ENCODE measurements at regions of chr5 and their contacts with region 1.

Region 1: DNA sequence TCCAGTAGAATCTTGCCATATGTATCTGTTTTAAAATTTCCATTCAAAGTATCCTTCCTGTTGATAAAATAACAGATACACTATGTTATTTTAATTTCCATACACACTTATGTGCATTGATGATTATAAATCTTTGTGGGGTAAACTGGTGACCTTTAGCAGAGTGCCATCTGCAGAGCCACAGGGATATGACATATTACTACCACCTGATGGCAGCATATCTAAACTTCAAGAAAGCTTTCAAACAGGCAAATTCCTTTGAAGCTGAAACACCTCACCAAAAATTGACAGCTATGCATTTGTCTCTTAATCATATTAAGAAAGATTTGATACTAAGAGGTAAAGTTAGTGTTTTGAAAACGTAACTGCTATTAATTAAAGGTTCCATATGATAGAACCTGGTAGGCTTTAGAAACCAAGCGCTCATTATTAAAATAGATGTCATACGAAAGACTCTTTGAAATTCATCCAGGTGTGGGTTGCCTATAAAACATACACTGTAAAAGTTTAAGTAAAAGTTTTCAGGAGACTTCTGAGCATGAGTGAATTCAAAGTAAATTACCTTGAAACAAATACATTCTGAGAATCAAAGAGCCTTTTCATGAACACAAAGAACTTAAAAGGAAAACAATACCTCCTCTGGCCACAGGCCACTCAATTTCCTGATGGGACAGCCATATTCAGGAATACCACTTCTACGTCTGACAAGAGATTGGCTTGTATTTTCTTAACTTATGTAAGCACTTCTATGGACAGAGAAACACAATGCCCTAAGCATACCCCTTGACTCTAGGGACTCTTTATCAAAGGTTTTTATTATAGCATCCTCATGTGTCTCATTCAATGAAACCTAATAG is 93.3 kb downstream of the KIAA0825 start:
- DNase-seq: peak; percentile 9
- ATAC-seq: peak; percentile 94
- H3K4me3 ChIP-seq: no peak overlapping the region
- H3K27ac ChIP-seq: no peak overlapping the region
- H3K4me1 ChIP-seq: no peaks in the 10 kb centered on the region
- H3K27me3 ChIP-seq: no peaks in the 10 kb centered on the region
- CTCF ChIP-seq: peak; percentile 51 to 76 (median 61); a peak in 5 of 6 replicates
- EP300 ChIP-seq: no peak
- POLR2A ChIP-seq: no peak
- RAD21 ChIP-seq: peak; percentile 90

Region 2: DNA sequence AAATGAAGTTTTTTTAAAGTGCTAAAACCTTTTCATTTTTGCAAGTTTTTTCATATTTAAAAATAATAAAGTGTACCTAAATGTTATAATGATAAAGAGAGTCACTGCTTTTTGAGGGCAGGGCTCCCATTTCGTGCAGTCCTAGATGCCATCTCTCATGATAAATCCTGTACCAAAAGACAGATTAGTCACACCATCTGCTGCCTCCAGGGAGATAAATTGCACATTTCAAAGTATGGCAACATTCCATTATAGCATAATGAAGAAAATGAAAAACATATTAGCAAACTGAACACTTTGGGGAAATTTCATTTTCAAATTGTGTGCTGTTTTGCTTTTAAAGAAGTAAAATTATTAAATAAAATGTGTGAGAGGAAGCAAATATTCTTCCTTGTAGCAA is 163.9 kb before region 1 on chr5:
- CTCF ChIA-PET with region 1: no interaction called
- POLR2A ChIA-PET with region 1: no interaction called
- RAD21 ChIA-PET with region 1: no interaction called
- SMC1A ChIA-PET with region 1: no interaction called
- in situ Hi-C with region 1: no loop called
- intact Hi-C with region 1: no loop called
- DNase-seq: no peak
- ATAC-seq: no peak
- H3K4me3 ChIP-seq: no peak overlapping the region
- H3K27ac ChIP-seq: no peak overlapping the region
- H3K4me1 ChIP-seq: no peaks in the 10 kb centered on the region
- H3K27me3 ChIP-seq: no peaks in the 10 kb centered on the region
- CTCF ChIP-seq: no peak
- EP300 ChIP-seq: no peak
- POLR2A ChIP-seq: no peak
- RAD21 ChIP-seq: no peak

Region 3: DNA sequence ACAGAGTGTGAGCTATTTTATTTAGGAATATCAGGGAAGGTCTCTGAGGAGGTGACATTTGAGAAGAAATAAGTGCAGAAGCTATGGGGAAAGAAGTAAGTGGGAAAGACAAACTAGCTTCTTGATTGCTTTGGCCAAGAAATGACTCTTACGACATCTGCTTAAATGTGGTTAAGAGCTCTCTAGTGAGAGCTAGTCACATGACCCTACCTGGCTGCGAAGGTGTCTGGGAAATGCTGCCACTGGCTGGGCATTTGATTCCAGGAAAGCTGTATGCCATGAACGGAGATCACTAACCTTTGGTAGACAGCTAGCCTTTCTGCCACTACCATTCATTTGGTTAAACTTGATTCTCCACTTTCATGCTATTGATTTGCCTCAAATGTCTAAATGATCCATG is 13.2 kb after region 1 on chr5:
- CTCF ChIA-PET with region 1: interaction called, 10 read pairs
- POLR2A ChIA-PET with region 1: no interaction called
- RAD21 ChIA-PET with region 1: no interaction called
- SMC1A ChIA-PET with region 1: interaction called, 11 read pairs
- in situ Hi-C with region 1: no loop called
- intact Hi-C with region 1: no loop called
- DNase-seq: no peak
- ATAC-seq: no peak
- H3K4me3 ChIP-seq: no peak overlapping the region
- H3K27ac ChIP-seq: no peak overlapping the region
- H3K4me1 ChIP-seq: no peaks in the 10 kb centered on the region
- H3K27me3 ChIP-seq: no peaks in the 10 kb centered on the region
- CTCF ChIP-seq: no peak
- EP300 ChIP-seq: no peak
- POLR2A ChIP-seq: no peak
- RAD21 ChIP-seq: no peak

Region 4: GRCh38 chr5:94613583-94613982 is 88.5 kb after region 1 on chr5:
- CTCF ChIA-PET with region 1: interaction called, 9 read pairs
- POLR2A ChIA-PET with region 1: no interaction called
- RAD21 ChIA-PET with region 1: interaction called, 7 read pairs
- SMC1A ChIA-PET with region 1: interaction called, 16 read pairs
- in situ Hi-C with region 1: no loop called
- intact Hi-C with region 1: loop called (anchors 2 kb)
- DNase-seq: no peak
- ATAC-seq: peak; percentile 32
- H3K4me3 ChIP-seq: no peak overlapping the region
- H3K27ac ChIP-seq: no peak overlapping the region
- H3K4me1 ChIP-seq: peaks cover 3% of the 10 kb centered on the region
- H3K27me3 ChIP-seq: no peaks in the 10 kb centered on the region
- CTCF ChIP-seq: peak; percentile 27 to 32 (median 31); a peak in 4 of 6 replicates
- EP300 ChIP-seq: no peak
- POLR2A ChIP-seq: no peak
- RAD21 ChIP-seq: peak; percentile 44

Region 5: DNA sequence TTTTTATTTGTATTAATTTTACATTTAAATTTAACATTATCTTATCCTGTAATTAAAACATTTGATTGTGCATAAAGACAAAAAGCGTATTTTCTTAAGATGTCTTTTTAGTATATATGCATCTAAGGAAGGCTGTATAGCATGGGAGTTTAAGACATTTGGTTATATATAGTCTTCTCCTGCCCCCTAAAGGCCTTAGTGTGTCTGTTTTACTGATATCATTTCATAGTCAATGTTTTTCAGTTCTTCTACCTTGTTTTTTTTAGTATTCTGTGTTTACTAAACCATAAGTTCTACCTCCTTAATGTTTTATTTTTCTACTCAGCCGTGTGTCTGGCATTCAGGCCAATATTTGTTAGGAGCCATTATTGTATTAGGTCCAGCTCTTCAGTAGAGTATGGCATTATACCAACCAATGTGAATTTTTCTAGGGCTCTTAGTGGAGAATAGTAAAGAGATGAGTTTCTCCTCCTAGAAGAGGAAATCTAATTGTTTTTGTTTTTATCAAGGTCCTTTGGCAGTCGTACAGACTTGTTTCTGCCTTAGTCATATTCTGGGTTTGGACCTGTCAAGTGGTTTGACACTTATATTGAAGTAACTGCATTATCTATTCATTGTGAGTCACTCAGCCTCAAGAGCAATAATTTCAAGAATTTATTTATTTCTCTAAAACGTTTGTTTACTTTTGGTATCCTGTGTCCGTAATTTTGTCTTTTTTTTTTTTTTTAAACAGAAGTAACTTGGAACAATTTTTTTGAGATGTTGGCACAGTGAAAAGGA is 168.2 kb after region 1 on chr5:
- CTCF ChIA-PET with region 1: interaction called, 30 read pairs
- POLR2A ChIA-PET with region 1: no interaction called
- RAD21 ChIA-PET with region 1: interaction called, 23 read pairs
- SMC1A ChIA-PET with region 1: interaction called, 13 read pairs
- in situ Hi-C with region 1: no loop called
- intact Hi-C with region 1: loop called (anchors 1 kb)
- DNase-seq: no peak
- ATAC-seq: peak; percentile 86
- H3K4me3 ChIP-seq: no peak overlapping the region
- H3K27ac ChIP-seq: no peak overlapping the region
- H3K4me1 ChIP-seq: no peaks in the 10 kb centered on the region
- H3K27me3 ChIP-seq: no peaks in the 10 kb centered on the region
- CTCF ChIP-seq: peak in 2 of 3 experiments; percentile 36 to 63; a peak in 3 of 6 replicates
- EP300 ChIP-seq: no peak
- POLR2A ChIP-seq: no peak
- RAD21 ChIP-seq: peak; percentile 62

Region 6: DNA sequence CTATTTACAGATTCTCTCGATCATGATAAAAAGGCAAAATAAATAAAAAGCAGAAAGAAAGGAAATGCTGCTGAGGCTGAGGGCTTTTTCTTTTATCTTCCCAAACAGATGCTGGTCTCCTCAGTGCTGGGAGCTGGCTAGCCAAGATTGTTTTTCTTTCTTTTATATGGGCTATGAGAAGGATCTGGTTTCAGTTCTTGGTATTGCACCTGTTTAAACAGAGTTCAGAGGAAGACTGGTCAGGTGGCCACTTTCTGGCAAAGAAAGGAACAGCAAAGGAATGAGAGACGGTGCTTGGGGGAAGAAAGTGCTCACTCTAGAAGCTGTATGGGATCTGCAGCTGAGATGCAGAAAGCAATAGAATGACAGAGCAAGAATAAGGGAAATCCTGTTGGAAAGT is 182.3 kb after region 1 on chr5:
- CTCF ChIA-PET with region 1: interaction called, 10 read pairs
- POLR2A ChIA-PET with region 1: no interaction called
- RAD21 ChIA-PET with region 1: interaction called, 8 read pairs
- SMC1A ChIA-PET with region 1: interaction called, 11 read pairs
- in situ Hi-C with region 1: no loop called
- intact Hi-C with region 1: no loop called
- DNase-seq: no peak
- ATAC-seq: no peak; the same call in 2 of the 3 replicates
- H3K4me3 ChIP-seq: no peak overlapping the region
- H3K27ac ChIP-seq: no peak overlapping the region
- H3K4me1 ChIP-seq: peaks cover 10% of the 10 kb centered on the region; the same call in 1 of the 2 replicates
- H3K27me3 ChIP-seq: no peaks in the 10 kb centered on the region
- CTCF ChIP-seq: no peak
- EP300 ChIP-seq: no peak
- POLR2A ChIP-seq: no peak
- RAD21 ChIP-seq: no peak

Region 7: DNA sequence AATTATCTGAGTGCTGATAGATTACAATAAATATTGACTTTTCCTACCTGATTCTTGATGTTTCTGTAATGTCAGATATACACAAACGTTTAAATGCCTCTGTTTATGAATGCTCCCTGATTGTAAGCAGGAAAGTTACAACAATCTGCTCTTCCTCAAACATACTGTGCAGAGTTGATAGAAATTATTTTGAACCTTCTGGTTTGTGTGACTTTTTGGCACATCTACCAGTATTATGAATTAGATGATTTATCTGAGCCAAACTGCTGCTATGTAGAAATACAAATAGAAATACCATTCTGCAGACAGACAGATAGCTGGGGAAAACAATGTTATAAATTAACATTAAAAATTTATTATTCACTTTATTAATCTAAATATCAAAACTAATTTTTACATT is 206.4 kb after region 1 on chr5:
- CTCF ChIA-PET with region 1: interaction called, 83 read pairs
- POLR2A ChIA-PET with region 1: no interaction called
- RAD21 ChIA-PET with region 1: interaction called, 74 read pairs
- SMC1A ChIA-PET with region 1: interaction called, 59 read pairs
- in situ Hi-C with region 1: no loop called
- intact Hi-C with region 1: no loop called
- DNase-seq: no peak
- ATAC-seq: no peak
- H3K4me3 ChIP-seq: no peak overlapping the region
- H3K27ac ChIP-seq: no peak overlapping the region
- H3K4me1 ChIP-seq: no peaks in the 10 kb centered on the region
- H3K27me3 ChIP-seq: no peaks in the 10 kb centered on the region
- CTCF ChIP-seq: no peak
- EP300 ChIP-seq: no peak
- POLR2A ChIP-seq: no peak
- RAD21 ChIP-seq: no peak

Region 8: DNA sequence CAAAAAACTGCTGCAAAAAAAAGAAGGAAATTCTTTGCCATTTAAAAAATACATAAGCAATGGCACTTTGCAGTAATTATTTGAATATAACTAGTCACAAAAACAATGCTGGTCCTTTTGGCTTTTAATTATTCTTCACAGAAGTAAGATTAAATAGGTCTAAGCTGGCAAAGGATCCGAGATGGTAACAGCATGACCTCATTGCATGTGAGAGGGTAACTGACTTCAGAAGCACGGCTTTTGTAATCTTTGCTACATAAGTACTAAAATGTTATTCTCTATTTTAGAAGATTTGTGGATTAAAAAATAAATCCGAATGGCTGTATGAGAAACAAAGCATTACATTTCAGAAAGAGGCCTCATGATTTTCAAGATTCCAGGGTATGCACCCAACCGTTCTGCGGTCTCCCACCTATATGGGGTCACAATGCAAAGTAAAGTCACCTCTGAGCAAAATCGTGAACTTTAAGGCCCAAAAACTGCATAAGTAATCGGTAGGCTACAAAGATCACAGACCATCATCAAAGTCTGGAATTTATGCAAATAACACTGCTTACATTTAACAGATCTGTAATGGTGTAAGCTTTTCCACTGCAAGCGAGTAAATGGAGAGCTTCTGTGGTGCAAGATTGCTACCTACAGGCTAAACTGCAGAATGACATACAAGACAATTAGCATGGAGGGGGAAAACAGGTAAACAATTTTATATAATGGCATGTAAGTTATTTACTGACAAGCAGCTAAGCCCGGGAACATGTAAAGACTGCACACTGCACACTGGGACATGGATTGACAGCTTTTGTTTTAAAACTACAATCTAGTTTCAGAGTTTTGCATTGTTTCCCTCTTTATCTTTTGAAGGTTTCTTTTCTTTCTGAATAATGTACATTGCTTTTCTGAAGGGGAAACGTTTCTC is 325.0 kb after region 1 on chr5:
- CTCF ChIA-PET with region 1: interaction called, 31 read pairs
- POLR2A ChIA-PET with region 1: no interaction called
- RAD21 ChIA-PET with region 1: interaction called, 22 read pairs
- SMC1A ChIA-PET with region 1: interaction called, 24 read pairs
- in situ Hi-C with region 1: no loop called
- intact Hi-C with region 1: loop called (anchors 1 kb)
- DNase-seq: peak; percentile 16
- ATAC-seq: peak; percentile 92
- H3K4me3 ChIP-seq: no peak overlapping the region
- H3K27ac ChIP-seq: no peak overlapping the region
- H3K4me1 ChIP-seq: no peaks in the 10 kb centered on the region
- H3K27me3 ChIP-seq: no peaks in the 10 kb centered on the region
- CTCF ChIP-seq: peak; percentile 68 to 79 (median 74)
- EP300 ChIP-seq: no peak
- POLR2A ChIP-seq: no peak
- RAD21 ChIP-seq: peak; percentile 99

Measured in GM12878 (cell line).